Ovary (tissue), 10 donors: ENCODE measurements at regions of chr18 and their contacts with region 1.

Region 1: DNA sequence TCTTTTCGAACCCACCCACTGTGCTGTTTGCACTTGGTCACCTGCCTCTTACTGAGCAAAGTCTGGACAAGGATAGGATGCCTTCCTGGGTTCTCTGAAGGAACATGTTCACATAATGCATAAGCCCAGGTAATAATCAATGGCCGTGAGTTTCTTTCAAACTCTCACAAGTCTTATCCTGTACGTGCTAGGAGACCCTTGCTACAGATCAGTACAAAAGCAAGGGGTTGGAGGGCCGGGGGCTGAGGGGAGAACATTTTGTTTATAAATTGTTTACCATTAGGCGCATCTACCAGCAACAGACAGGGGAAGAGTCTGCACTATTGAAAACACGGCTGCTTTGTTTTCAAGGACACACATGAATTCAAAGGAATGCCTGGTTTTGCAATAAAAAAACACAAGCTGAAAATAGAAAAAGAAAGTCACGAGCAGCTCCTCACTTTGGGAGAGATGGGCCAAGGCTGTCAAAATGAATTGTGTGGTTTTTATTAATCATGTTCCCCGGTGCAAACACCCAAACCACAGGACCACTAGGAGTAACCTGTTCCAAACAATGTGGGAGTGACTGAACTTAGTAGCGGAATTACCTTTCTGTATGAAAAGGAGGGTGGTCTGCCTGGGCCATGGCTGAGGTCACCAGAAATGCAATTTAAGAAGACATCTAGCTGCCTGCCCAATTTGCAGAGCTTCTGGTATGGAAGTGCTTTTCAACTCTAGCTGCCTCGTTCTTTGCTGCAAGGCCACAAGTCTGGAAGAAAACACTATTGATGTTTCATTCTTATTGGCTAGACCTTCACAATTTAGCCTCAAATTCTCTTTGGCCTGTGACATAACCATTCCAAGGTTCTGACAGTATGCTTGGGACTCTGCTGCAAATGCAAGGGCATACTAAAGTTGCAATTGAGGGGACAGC is 73.5 kb downstream of the CCBE1 start:
- DNase-seq: peak in 2 of 5 donors; percentile 45 to 52
- H3K4me3 ChIP-seq: no peak overlapping the region
- H3K27ac ChIP-seq: peak overlapping the region; percentile 65 to 77
- H3K4me1 ChIP-seq: peaks cover 28% of the 10 kb centered on the region
- H3K27me3 ChIP-seq: no peaks in the 10 kb centered on the region
- CTCF ChIP-seq: no peak
- EP300 ChIP-seq: peak; percentile 5
- POLR2A ChIP-seq: no peak

Region 2: GRCh38 chr18:59459369-59460079 is 164.2 kb before region 1 on chr18:
- intact Hi-C with region 1: loop called in 1 of 4 experiments (anchors 10 kb)
- DNase-seq: no peak
- H3K4me3 ChIP-seq: no peak overlapping the region
- H3K27ac ChIP-seq: peak overlapping the region in 1 of 2 donors; percentile 22
- H3K4me1 ChIP-seq: peaks cover 6% of the 10 kb centered on the region
- H3K27me3 ChIP-seq: no peaks in the 10 kb centered on the region
- CTCF ChIP-seq: peak; percentile 44 to 81 (median 72)
- EP300 ChIP-seq: no peak
- POLR2A ChIP-seq: no peak